ENCODE measurements at regions of chr4 and their contacts with region 1.

Region 1: DNA sequence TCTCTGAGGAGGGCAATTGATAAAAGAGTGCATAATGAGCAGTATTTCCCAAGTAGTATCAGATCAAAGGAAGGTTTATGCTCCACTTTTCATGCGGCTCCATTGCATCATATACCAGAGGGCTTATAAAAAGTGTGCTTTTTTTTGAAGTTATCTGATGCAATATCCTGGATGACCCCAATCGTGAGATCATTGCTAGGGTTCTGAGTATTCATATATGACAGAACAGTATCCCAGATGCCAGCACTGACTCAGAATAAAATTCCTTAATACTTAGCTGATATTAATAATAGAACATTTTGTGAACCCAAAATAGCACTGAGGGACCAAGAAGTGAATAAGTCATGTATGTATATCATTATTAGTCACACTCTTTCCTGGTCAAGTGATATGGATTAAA is 945.5 kb upstream of the AGA start:
- DNase-seq: no peak
- H3K4me3 ChIP-seq: no peak overlapping the region
- CTCF ChIP-seq: no peak

Region 2: DNA sequence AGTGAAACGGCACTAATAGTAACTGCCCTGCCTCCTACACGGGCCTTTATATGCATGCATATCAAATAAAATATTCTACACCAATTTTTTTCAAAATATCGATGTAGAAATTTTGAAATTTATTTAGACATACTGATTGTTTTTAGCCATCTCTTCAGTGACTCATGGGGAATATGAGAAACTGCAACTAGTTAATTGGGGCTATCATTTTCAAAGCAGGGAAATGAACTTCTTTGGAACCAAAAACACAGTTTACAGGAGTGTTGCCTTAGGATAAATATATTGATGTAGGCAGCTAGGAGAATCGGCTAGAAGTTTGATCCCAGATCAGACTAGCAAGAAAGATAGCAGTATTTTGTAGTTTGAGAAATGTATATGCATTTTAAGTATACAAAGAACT is 65.3 kb after region 1 on chr4:
- in situ Hi-C with region 1: loop called (anchors 5 kb)
- DNase-seq: no peak
- H3K4me3 ChIP-seq: no peak overlapping the region
- CTCF ChIP-seq: no peak

Measured in astrocyte of the cerebellum (primary cell).